Thyroid gland (tissue), 4 donors: ENCODE measurements at regions of chr14 and their contacts with region 1.

Region 1: DNA sequence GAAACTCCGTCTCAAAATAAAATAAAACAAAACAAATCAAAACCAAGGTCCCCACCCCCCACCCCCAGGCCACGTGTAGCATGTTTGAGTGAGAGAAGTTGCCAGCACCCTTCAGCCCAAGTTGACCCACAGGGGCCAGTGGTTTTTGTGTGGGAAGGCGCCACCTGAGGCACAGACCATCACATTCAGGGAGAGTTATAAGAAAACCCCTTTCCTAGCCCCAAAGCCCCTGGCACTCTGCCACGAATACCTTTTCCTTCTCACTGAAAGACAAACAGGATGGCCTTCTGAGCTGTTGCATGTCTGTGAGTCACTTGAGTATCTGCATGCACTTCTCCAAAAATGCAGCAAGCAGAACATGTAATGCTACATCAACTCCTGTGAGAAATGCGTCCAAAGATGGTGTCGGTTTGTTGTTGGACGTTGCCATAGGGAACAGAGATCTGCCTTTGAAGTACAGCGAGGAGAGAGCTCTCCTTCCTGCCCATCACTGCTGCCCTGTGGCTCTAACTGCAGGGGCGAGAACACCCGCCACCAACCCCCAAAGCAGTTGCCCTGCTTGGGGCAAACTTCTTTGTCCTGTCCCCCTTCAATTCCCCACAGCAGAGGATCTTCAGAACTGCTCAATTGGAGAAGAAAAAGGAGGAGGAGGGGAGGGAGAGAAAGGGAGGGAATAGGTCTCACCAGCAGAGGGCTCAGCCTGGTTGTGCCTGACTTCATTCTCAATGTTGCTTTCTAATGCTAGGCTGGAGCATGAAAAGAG is 2.7 kb upstream of the TRAF3 start:
- DNase-seq: peak; percentile 67 to 70
- H3K4me3 ChIP-seq: no peak overlapping the region
- H3K27ac ChIP-seq: peak overlapping the region; percentile 31 to 63 (median 46)
- H3K4me1 ChIP-seq: peaks cover 9 to 23% of the 10 kb centered on the region in 2 donors
- H3K27me3 ChIP-seq: no peaks in the 10 kb centered on the region
- CTCF ChIP-seq: peak in 5 of 6 experiments; percentile 41 to 89 (median 76)
- POLR2A ChIP-seq: no peak

Region 2: DNA sequence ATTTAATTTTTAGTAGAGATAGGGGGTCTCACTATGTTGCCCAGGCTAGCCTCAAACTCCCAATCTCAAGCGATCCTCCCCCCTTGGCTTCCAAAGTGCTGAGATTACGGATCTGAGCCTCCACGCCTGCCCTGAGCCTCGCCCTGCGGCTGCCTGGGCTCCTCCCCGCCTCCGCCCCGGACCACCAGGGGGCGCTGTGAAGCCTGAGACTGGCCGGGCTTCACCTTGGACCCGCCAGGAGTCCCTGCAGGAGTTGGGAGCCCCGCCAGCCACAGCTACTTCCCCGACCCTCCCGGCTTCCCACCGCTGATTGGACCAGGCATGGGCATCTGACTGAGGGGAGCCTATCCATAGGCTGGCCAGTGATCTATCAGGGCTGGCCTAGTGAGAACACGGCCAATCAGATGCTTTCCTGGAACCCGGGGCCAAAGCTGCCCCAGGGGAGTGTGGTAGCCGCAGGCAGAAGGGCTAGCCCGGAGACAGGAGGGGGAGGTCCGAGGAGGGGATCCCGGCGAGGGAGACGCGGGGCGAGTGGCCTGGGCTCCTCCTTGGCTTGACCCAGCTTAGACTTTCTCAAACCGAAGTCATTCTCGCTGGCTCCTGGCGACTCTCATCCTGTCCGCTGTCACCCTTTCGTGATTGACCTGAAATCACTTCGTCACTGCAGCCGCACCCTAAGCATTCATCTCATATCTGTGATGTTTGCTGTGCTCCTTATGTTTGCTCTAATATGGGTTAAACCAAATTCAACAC is 249.9 kb before region 1 on chr14:
- intact Hi-C with region 1: no loop called
- DNase-seq: peak; percentile 100
- H3K4me3 ChIP-seq: peak overlapping the region; percentile 14 to 70 (median 36)
- H3K27ac ChIP-seq: peak overlapping the region; percentile 63 to 83 (median 83)
- H3K4me1 ChIP-seq: peaks cover 5% of the 10 kb centered on the region in 2 donors
- H3K27me3 ChIP-seq: no peaks in the 10 kb centered on the region
- CTCF ChIP-seq: peak; percentile 94 to 100 (median 98)
- POLR2A ChIP-seq: peak in 1 of 2 donors; percentile 75

Region 3: DNA sequence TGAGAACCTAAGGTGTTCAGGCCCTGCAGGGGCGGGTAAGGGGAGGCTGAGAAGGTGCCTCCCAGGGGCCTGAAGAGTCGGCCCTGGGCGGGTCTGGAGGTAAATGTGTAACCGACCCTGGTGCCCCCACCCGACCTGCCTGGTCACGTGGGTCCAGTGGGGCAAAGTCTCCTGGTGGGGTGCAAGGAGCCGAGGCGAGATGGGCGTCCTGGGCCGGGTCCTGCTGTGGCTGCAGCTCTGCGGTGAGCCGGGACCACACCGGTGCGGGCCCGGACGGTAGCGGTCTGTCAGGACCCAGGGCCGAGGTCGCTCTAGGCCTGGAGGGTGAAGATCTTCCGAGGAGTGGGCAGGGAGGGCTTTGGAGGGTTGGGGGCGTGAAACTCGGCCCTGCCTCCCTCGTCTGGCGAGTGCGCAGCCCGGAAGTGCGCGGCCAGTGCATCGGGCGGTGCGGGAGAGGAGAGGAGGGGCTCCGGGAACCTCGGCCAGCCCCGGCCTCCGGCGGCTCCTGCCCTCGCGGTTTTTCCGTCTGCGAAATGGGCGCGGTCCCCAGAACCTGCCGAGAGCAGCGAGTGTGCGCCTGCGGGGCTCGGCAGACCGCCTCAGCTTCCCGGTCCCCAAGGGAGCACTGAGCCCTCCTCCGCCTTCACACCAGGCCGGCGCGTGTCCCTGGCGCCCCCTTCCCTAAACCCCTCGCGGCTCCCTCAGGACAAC is 148.1 kb after region 1 on chr14 and contains the start of gene AMN:
- intact Hi-C with region 1: loop called (anchors 5 kb)
- DNase-seq: no peak
- H3K4me3 ChIP-seq: no peak within 1 kb of the TSS
- H3K27ac ChIP-seq: no peak within 1 kb of the TSS
- H3K4me1 ChIP-seq: peaks cover 0 to 12% of the 10 kb centered on the region in 2 donors
- H3K27me3 ChIP-seq: peaks cover 8% of the 10 kb centered on the region
- CTCF ChIP-seq: no peak
- POLR2A ChIP-seq: no peak
- total RNA-seq, gene AMN: 1.3 to 18.8 (median 3.3) TPM